GM12878 (cell line): ENCODE measurements at regions of chr2 and their contacts with region 1.

Region 1: GRCh38 chr2:217166241-217166850 is 306.5 kb upstream of the TNP1 start:
- DNase-seq: peak; percentile 15
- ATAC-seq: peak; percentile 80
- H3K4me3 ChIP-seq: no peak overlapping the region
- H3K27ac ChIP-seq: no peak overlapping the region
- H3K4me1 ChIP-seq: peaks cover 6% of the 10 kb centered on the region
- H3K27me3 ChIP-seq: no peaks in the 10 kb centered on the region
- CTCF ChIP-seq: peak; percentile 42 to 61 (median 44); a peak in 5 of 6 replicates
- EP300 ChIP-seq: no peak
- POLR2A ChIP-seq: no peak
- RAD21 ChIP-seq: peak; percentile 82

Region 2: DNA sequence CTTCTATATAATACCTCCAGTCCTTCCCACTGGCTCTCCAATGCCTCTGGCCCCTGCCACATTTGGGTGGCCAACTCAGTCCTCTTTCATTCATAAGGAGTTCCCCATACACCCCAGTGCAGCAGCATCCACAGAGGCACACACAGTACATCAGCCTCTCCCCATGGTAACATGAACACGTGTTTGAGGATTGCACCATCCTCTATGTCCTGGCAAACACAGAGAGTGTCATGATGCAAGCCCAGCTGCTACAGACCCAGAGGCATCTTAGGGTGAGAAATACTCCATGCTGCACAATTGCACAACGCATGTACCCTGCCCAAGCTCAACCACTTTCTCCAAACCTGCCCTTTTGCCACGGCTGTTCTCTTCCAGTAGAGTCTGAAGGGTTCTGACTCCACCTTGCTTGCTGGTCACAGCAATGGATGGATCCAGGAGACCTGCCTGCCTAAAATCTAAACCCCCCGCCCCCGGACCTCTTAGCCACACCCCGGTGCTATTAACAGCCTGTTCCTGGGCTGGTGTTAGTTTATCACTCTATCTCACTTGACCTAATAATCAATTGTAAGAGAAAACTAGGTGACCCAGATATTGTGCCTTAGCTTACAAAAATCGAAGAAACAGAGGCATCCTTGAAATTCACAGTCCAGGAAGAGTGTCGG is 482.4 kb before region 1 on chr2:
- CTCF ChIA-PET with region 1: no interaction called
- POLR2A ChIA-PET with region 1: no interaction called
- RAD21 ChIA-PET with region 1: no interaction called
- SMC1A ChIA-PET with region 1: no interaction called
- in situ Hi-C with region 1: no loop called
- intact Hi-C with region 1: loop called (anchors 5 kb)
- DNase-seq: no peak
- ATAC-seq: no peak
- H3K4me3 ChIP-seq: no peak overlapping the region
- H3K27ac ChIP-seq: no peak overlapping the region
- H3K4me1 ChIP-seq: no peaks in the 10 kb centered on the region
- H3K27me3 ChIP-seq: no peaks in the 10 kb centered on the region; a peak in 2 of 4 replicates
- CTCF ChIP-seq: no peak
- EP300 ChIP-seq: no peak
- POLR2A ChIP-seq: no peak
- RAD21 ChIP-seq: no peak

Region 3: GRCh38 chr2:216777650-216778273 is 388.6 kb before region 1 on chr2:
- CTCF ChIA-PET with region 1: interaction called, 5 read pairs
- POLR2A ChIA-PET with region 1: no interaction called
- RAD21 ChIA-PET with region 1: no interaction called
- SMC1A ChIA-PET with region 1: no interaction called
- in situ Hi-C with region 1: no loop called
- intact Hi-C with region 1: loop called (anchors 2 kb)
- DNase-seq: peak; percentile 27
- ATAC-seq: peak; percentile 100
- H3K4me3 ChIP-seq: no peak overlapping the region
- H3K27ac ChIP-seq: no peak overlapping the region
- H3K4me1 ChIP-seq: no peaks in the 10 kb centered on the region
- H3K27me3 ChIP-seq: peaks cover 0 to 4% of the 10 kb centered on the region in 2 experiments; a peak in 1 of 4 replicates
- CTCF ChIP-seq: peak; percentile 74 to 87 (median 82)
- EP300 ChIP-seq: no peak
- POLR2A ChIP-seq: no peak
- RAD21 ChIP-seq: peak; percentile 63

Region 4: GRCh38 chr2:216922175-216922780 is 244.1 kb before region 1 on chr2:
- CTCF ChIA-PET with region 1: no interaction called
- POLR2A ChIA-PET with region 1: no interaction called
- RAD21 ChIA-PET with region 1: no interaction called
- SMC1A ChIA-PET with region 1: no interaction called
- in situ Hi-C with region 1: no loop called
- intact Hi-C with region 1: loop called (anchors 10 kb)
- DNase-seq: no peak
- ATAC-seq: peak; percentile 44
- H3K4me3 ChIP-seq: no peak overlapping the region
- H3K27ac ChIP-seq: no peak overlapping the region
- H3K4me1 ChIP-seq: 0 out of 2 replicates have a peak, but pooled peaks cover 3% of the 10 kb centered on the region
- H3K27me3 ChIP-seq: no peaks in the 10 kb centered on the region; a peak in 2 of 4 replicates
- CTCF ChIP-seq: no peak
- EP300 ChIP-seq: no peak
- POLR2A ChIP-seq: no peak
- RAD21 ChIP-seq: no peak

Region 5: DNA sequence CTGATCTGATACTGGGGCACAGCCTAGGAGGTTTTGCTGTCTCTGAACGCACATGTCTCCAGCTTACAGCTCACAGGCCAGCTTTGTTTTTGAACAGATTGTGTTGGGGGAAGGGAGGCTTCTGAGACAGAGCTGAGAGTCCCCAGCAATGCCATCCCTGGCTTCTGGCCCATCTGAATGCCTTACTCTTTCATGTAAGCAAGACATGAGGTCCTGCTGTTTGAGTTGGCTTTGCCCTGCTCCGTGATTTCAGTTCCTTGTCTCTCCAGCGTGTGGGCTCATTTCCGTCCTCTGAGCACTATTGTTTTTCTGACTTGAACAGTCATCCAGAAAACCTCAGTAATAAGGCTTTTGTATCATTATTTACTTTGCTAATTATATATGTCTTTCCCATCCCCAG is 111.6 kb before region 1 on chr2:
- CTCF ChIA-PET with region 1: interaction called, 5 read pairs
- POLR2A ChIA-PET with region 1: no interaction called
- RAD21 ChIA-PET with region 1: no interaction called
- SMC1A ChIA-PET with region 1: interaction called, 3 read pairs
- in situ Hi-C with region 1: no loop called
- intact Hi-C with region 1: loop called (anchors 10 kb)
- DNase-seq: no peak
- ATAC-seq: peak; percentile 91
- H3K4me3 ChIP-seq: no peak overlapping the region
- H3K27ac ChIP-seq: no peak overlapping the region
- H3K4me1 ChIP-seq: no peaks in the 10 kb centered on the region
- H3K27me3 ChIP-seq: no peaks in the 10 kb centered on the region; a peak in 1 of 4 replicates
- CTCF ChIP-seq: no peak
- EP300 ChIP-seq: peak in 1 of 2 experiments; percentile 45; a peak in 1 of 4 replicates
- POLR2A ChIP-seq: no peak
- RAD21 ChIP-seq: no peak

Region 6: DNA sequence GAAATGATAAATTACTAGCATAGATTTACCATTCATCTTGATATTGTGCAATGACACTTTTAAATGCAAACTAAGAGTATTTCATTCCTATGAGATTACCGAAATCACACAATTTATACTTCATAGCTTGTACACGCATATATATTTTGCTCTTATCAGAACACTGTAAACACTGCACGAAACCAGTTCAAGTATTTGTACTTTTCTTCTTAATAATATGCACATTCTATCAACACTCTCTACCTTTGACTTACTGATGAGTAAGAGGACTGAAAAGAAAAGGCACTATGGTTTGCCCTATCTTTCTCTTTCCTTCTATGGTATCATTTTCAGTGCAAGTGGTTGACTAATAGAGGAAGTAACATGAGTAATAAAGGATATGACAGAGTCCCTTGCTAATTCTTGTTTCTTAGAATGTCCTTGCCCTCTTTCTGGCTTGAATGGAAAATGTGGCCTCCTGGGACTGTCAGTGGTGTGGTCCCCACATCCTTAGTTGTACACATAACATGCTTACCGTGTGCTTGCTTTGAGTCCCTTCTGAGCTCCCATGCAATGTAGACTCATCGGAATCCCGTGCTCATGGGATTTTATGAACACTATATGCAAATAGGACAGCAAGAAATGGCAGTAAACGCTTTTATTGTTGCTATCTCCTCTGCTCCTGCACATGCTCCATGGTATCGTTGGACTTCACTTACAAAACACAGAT is 57.0 kb after region 1 on chr2:
- CTCF ChIA-PET with region 1: interaction called, 3 read pairs
- POLR2A ChIA-PET with region 1: no interaction called
- RAD21 ChIA-PET with region 1: interaction called, 3 read pairs
- SMC1A ChIA-PET with region 1: interaction called, 6 read pairs
- in situ Hi-C with region 1: no loop called
- intact Hi-C with region 1: loop called (anchors 2 kb)
- DNase-seq: peak; percentile 93
- ATAC-seq: peak; percentile 81
- H3K4me3 ChIP-seq: 0 out of 2 replicates have a peak overlapping the region, but pooled peaks have one; percentile 23
- H3K27ac ChIP-seq: peak overlapping the region; percentile 92
- H3K4me1 ChIP-seq: peaks cover 52% of the 10 kb centered on the region
- H3K27me3 ChIP-seq: no peaks in the 10 kb centered on the region
- CTCF ChIP-seq: no peak
- EP300 ChIP-seq: peak; percentile 90 to 96
- POLR2A ChIP-seq: no peak
- RAD21 ChIP-seq: 0 out of 2 replicates have a peak, but pooled peaks have one; percentile 19

Region 7: GRCh38 chr2:217477583-217477982 is 311.2 kb after region 1 on chr2:
- CTCF ChIA-PET with region 1: no interaction called
- POLR2A ChIA-PET with region 1: no interaction called
- RAD21 ChIA-PET with region 1: no interaction called
- SMC1A ChIA-PET with region 1: no interaction called
- in situ Hi-C with region 1: no loop called
- intact Hi-C with region 1: no loop called
- DNase-seq: no peak
- ATAC-seq: no peak
- H3K4me3 ChIP-seq: no peak overlapping the region
- H3K27ac ChIP-seq: no peak overlapping the region
- H3K4me1 ChIP-seq: no peaks in the 10 kb centered on the region
- H3K27me3 ChIP-seq: no peaks in the 10 kb centered on the region; a peak in 2 of 4 replicates
- CTCF ChIP-seq: no peak
- EP300 ChIP-seq: no peak
- POLR2A ChIP-seq: no peak
- RAD21 ChIP-seq: no peak